ENCODE measurements at regions of chr1 and their contacts with region 1.

Region 1: DNA sequence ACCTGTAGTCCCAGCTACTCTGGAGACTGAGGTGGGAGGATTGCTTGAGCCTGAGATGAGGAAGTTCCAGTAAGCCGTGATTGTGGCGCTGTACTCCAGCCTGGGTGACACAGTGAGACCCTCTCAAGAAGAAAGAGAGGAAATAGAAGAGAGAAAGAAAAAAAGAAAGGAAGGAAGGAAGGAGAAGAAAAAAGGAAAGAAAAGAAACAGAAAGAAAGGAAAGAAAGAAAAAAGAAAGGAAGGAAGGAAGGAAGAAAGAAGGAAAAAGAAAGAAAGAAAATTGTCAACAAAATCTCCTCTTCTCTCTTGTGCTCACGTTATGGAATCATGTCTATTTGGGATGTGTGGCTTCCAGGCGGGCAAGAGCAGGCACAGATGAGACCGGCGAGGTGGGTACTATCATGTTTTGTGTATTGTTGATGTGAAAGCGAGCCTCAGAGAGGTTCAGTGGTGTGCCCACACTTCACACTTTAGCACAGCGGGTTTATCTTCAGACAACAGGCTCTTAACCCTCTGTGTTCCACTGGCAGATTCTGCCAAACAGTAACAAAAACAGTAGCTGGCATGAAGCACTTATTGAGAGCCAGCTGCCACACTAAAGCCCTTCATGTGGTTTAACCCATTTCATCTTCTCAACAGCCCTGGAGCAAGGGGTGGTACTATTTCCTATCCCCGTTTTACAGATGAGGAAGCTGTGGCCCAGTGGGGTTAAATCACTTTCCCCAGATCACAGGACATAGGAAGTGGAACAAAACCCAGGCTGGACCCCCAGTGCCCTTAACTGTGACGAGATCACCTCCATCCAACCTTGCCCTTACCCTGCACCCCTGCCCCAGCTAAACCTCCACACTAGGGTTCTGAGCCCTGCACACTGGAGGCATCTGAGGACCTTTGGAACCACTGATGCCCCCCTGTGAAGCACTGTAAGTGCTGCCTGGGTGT is 94.7 kb upstream of the TARDBP start:
- DNase-seq: no peak
- H3K4me3 ChIP-seq: no peak overlapping the region
- H3K27ac ChIP-seq: no peak overlapping the region
- H3K4me1 ChIP-seq: peaks cover 7% of the 10 kb centered on the region
- H3K27me3 ChIP-seq: no peaks in the 10 kb centered on the region
- CTCF ChIP-seq: no peak

Region 2: GRCh38 chr1:10824821-10825423 is 92.9 kb before region 1 on chr1:
- CTCF ChIA-PET with region 1: no interaction called
- dilution Hi-C with region 1: loop called (anchors 5 kb)
- in situ Hi-C with region 1: no loop called
- intact Hi-C with region 1: no loop called
- DNase-seq: peak; percentile 96
- H3K4me3 ChIP-seq: peak overlapping the region; percentile 13 to 52 (median 15)
- H3K27ac ChIP-seq: peak overlapping the region; percentile 88
- H3K4me1 ChIP-seq: peaks cover 25% of the 10 kb centered on the region
- H3K27me3 ChIP-seq: no peaks in the 10 kb centered on the region
- CTCF ChIP-seq: no peak

Region 3: DNA sequence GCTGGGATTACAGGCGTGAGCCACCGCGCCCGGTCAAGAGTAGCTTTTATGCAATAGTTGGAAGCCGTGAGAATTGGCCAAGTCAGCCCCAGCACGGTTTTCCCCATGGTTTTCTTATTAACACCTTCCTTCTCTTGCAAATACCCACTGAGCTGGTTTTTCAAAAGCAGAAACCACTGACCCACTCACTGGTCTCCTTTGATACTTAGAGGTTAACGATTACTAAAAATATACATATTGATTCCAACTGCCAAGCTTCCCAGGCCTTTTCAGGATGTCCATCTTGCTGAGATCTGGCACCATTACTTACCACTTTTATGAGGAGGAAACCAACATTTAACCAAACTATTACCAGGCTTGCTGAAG is 68.7 kb after region 1 on chr1:
- CTCF ChIA-PET with region 1: no interaction called
- dilution Hi-C with region 1: loop called (anchors 5 kb)
- in situ Hi-C with region 1: no loop called
- intact Hi-C with region 1: no loop called
- DNase-seq: no peak
- H3K4me3 ChIP-seq: no peak overlapping the region
- H3K27ac ChIP-seq: no peak overlapping the region
- H3K4me1 ChIP-seq: no peaks in the 10 kb centered on the region
- H3K27me3 ChIP-seq: no peaks in the 10 kb centered on the region
- CTCF ChIP-seq: no peak

Measured in mammary epithelial cell (primary cell).